Left lung (tissue), 14 donors: ENCODE measurements at regions of chr18 and their contacts with region 1.

Region 1: DNA sequence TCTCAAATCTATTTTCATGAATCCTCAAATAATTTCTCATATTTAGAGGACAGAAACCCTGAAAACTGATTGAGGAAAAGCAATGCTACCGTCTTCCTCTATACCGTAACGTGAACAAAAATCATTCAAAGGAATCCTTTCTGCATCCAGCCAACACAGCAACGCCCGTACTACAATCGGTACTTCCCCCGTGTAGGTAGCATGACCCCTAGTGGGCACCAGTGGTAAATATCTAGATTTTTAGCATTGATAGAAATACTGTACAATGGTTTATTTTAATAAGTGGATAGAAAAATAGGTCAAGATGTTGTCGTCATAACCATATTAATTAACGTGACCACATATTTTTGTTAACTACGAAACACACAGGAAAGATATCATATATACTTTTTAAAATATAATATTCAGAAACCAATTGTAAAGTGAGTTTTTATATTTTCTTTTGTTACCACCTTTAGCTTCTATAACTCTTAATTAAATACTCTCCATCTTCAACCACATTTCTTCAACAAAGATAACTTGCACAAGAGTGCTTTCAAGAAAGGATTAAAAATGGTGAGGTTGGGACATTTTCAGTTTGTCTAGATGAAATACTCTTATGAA is 194.1 kb downstream of the SS18 start:
- DNase-seq: peak in 2 of 4 donors; percentile 14 to 49
- ATAC-seq: peak; percentile 65
- H3K4me3 ChIP-seq: no peak overlapping the region
- H3K27ac ChIP-seq: no peak overlapping the region
- H3K4me1 ChIP-seq: no peaks in the 10 kb centered on the region
- H3K27me3 ChIP-seq: no peaks in the 10 kb centered on the region
- CTCF ChIP-seq: peak; percentile 52 to 67

Region 2: DNA sequence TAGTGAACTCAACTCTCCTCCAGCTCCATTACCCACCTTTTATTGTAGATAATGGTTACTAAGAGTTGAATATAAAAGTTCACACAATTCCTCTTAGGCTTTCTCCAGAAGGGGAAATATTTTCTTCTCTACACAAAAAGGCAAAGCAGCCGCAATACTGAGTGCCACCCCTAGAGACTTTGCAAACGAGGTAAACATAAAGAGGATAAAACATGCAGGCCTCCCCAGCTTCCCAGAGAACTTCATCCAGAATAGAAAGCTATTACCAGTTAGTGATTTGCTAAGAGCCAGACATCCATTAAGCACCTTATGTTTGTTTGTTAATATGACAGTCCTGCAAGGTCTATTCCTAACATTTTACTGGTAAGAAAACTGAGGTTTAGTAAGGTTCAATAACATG is 561.7 kb before region 1 on chr18:
- intact Hi-C with region 1: no loop called
- DNase-seq: no peak
- ATAC-seq: no peak
- H3K4me3 ChIP-seq: no peak overlapping the region
- H3K27ac ChIP-seq: no peak overlapping the region
- H3K4me1 ChIP-seq: no peaks in the 10 kb centered on the region
- H3K27me3 ChIP-seq: no peaks in the 10 kb centered on the region
- CTCF ChIP-seq: no peak

Region 3: GRCh38 chr18:25604894-25605597 is 291.2 kb before region 1 on chr18:
- intact Hi-C with region 1: loop called in 1 of 2 experiments (anchors 10 kb)
- DNase-seq: peak in 1 of 4 donors; percentile 53
- ATAC-seq: no peak
- H3K4me3 ChIP-seq: no peak overlapping the region
- H3K27ac ChIP-seq: no peak overlapping the region
- H3K4me1 ChIP-seq: no peaks in the 10 kb centered on the region
- H3K27me3 ChIP-seq: no peaks in the 10 kb centered on the region
- CTCF ChIP-seq: no peak

Region 4: GRCh38 chr18:25843791-25844190 is 52.5 kb before region 1 on chr18:
- intact Hi-C with region 1: no loop called
- DNase-seq: no peak
- ATAC-seq: no peak
- H3K4me3 ChIP-seq: no peak overlapping the region
- H3K27ac ChIP-seq: no peak overlapping the region
- H3K4me1 ChIP-seq: no peaks in the 10 kb centered on the region
- H3K27me3 ChIP-seq: no peaks in the 10 kb centered on the region
- CTCF ChIP-seq: no peak

Region 5: GRCh38 chr18:26133652-26134051 is 237.4 kb after region 1 on chr18 and contains the start of gene PSMA8:
- intact Hi-C with region 1: no loop called
- DNase-seq: peak in 2 of 4 donors; percentile 4 to 85
- ATAC-seq: no peak
- H3K4me3 ChIP-seq: peak within 1 kb of the TSS in 1 of 2 donors; percentile 13
- H3K27ac ChIP-seq: no peak within 1 kb of the TSS
- H3K4me1 ChIP-seq: no peaks in the 10 kb centered on the region
- H3K27me3 ChIP-seq: no peaks in the 10 kb centered on the region
- CTCF ChIP-seq: no peak
- polyA plus RNA-seq, gene PSMA8: 0.13 TPM in 1 of 6 donors, not detected in the others